ENCODE measurements at regions of chr19 and their contacts with region 1.

Region 1: GRCh38 chr19:47765523-47766358 is 12.8 kb upstream of the SELENOW start:
- DNase-seq: peak; percentile 77
- H3K4me3 ChIP-seq: no peak overlapping the region; a peak in 1 of 4 replicates
- H3K27ac ChIP-seq: no peak overlapping the region
- H3K4me1 ChIP-seq: no peaks in the 10 kb centered on the region; a peak in 1 of 4 replicates
- H3K27me3 ChIP-seq: no peaks in the 10 kb centered on the region
- CTCF ChIP-seq: peak; percentile 79
- EP300 ChIP-seq: no peak
- RAD21 ChIP-seq: peak; percentile 75

Region 2: GRCh38 chr19:47752440-47753211 is 13.1 kb before region 1 on chr19:
- CTCF ChIA-PET with region 1: interaction called, 14 read pairs
- POLR2A ChIA-PET with region 1: interaction called, 4 read pairs
- DNase-seq: no peak
- H3K4me3 ChIP-seq: no peak overlapping the region
- H3K27ac ChIP-seq: no peak overlapping the region
- H3K4me1 ChIP-seq: no peaks in the 10 kb centered on the region; a peak in 1 of 4 replicates
- H3K27me3 ChIP-seq: no peaks in the 10 kb centered on the region
- CTCF ChIP-seq: no peak
- EP300 ChIP-seq: no peak
- RAD21 ChIP-seq: no peak

Region 3: GRCh38 chr19:47776568-47776967 is 10.8 kb after region 1 on chr19:
- CTCF ChIA-PET with region 1: interaction called, 12 read pairs
- POLR2A ChIA-PET with region 1: no interaction called
- DNase-seq: no peak
- H3K4me3 ChIP-seq: no peak overlapping the region
- H3K27ac ChIP-seq: no peak overlapping the region
- H3K4me1 ChIP-seq: peaks cover 8 to 13% of the 10 kb centered on the region in 2 experiments; a peak in 2 of 4 replicates
- H3K27me3 ChIP-seq: no peaks in the 10 kb centered on the region
- CTCF ChIP-seq: no peak
- EP300 ChIP-seq: no peak
- RAD21 ChIP-seq: no peak